ENCODE measurements at regions of chr10 and their contacts with region 1.

Region 1: GRCh38 chr10:69004821-69005220 is 16.2 kb downstream of the KIFBP start:
- DNase-seq: peak in 1 of 4 donors; percentile 35
- ATAC-seq: peak; percentile 69
- H3K4me3 ChIP-seq: no peak overlapping the region
- H3K27ac ChIP-seq: no peak overlapping the region
- H3K4me1 ChIP-seq: peaks cover 0 to 7% of the 10 kb centered on the region in 2 donors
- H3K27me3 ChIP-seq: no peaks in the 10 kb centered on the region
- CTCF ChIP-seq: peak; percentile 43 to 52

Region 2: DNA sequence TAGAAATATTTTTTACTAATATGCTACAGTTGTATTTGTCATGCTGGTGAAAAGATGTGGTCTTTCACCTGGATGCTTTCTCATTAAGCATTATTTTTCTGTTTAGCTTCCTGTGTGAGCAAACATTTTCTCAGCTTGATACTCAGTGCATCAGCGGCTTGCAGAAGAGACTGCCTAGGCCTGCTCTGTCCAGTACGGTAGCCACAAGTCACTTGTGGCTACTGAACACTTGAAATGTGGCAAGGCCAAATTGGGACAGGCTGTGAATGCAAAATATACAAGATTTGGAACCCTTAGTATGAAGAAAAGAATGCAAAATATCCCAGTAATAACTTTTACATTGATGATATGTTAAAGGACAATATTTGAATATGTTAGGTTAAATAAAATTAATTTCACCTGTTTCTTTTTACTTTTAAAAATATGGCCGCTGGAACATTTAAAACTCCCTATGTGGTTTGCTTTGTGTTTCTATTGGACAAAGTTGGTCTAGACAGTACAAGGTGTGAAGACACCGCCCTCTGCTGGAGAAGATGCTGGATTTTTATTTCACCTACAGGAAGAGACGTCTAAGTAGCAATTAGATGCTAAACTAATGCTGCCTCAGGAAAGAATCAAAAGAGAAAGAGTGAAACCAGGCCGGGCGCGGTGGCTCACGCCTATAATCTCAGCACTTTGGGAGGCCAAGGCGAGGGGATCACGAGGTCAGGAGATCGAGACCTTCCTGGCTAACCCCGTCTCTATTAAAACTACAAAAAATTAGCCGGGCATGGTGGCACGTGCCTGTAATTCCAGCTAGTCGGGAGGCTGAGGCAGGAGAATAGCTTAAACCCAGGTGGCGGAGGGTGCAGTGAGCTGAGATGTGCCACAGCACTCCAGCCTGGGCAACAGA is 88.4 kb after region 1 on chr10:
- intact Hi-C with region 1: loop called in 1 of 2 experiments (anchors 5 kb)
- DNase-seq: peak in 3 of 4 donors; percentile 54 to 78 (median 69)
- ATAC-seq: peak; percentile 86
- H3K4me3 ChIP-seq: peak overlapping the region in 1 of 2 donors; percentile 55
- H3K27ac ChIP-seq: peak overlapping the region in 1 of 2 donors; percentile 95
- H3K4me1 ChIP-seq: peaks cover 0 to 75% of the 10 kb centered on the region in 2 donors
- H3K27me3 ChIP-seq: no peaks in the 10 kb centered on the region
- CTCF ChIP-seq: peak; percentile 76 to 81